Tibial artery (tissue), 4 donors: ENCODE measurements at regions of chr12 and their contacts with region 1.

Region 1: GRCh38 chr12:64392221-64392620 is 1.7 kb upstream of the C12orf56 start:
- DNase-seq: no peak
- H3K4me3 ChIP-seq: no peak overlapping the region
- H3K27ac ChIP-seq: no peak overlapping the region
- H3K4me1 ChIP-seq: peaks cover 0 to 8% (median 3%) of the 10 kb centered on the region in 4 donors
- H3K27me3 ChIP-seq: peaks cover 0 to 33% of the 10 kb centered on the region in 2 donors
- CTCF ChIP-seq: no peak

Region 2: DNA sequence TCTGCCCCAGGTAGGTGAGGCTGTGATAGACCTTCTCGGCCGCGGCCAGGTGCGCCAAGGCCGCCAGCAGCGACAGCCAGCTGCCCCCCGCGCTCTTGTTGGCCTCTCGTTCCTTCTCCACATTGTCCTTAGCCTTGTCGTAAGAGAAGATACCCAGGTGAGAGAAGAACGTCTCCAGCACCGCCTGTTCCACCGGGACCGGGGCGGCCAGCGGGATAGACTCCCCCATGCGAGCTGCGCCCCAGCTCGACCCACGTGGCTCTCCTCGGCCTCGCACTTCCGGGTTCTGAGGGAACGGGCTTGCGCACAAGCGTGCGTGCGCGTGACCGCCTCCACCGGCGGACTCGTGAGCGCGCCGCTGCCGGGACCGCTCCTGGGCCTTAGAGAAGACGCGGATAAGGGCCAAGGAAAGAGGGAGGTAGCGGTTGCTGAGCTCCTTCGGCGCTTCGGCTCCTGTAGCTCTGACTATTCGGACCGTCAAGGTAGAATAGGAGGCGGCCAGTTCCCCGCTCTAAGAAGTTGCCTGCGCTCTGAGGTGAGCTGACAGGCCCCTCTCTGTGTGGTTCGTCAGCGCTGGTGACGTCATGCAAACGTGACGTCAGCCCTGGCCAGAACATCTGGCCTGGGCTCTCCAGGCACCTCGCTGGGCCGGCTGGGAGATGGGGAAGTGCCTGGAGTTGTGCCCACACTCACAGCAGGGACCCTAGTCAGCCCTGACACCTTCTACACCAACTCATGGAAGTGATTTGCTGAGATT is 170.0 kb before region 1 on chr12 and contains the start of gene KICS2:
- intact Hi-C with region 1: loop called (anchors 10 kb)
- DNase-seq: peak; percentile 92 to 96
- H3K4me3 ChIP-seq: peak within 1 kb of the TSS; percentile 95
- H3K27ac ChIP-seq: peak within 1 kb of the TSS; percentile 96
- H3K4me1 ChIP-seq: peaks cover 0 to 10% (median 6%) of the 10 kb centered on the region in 4 donors
- H3K27me3 ChIP-seq: no peaks in the 10 kb centered on the region
- CTCF ChIP-seq: no peak

Region 3: GRCh38 chr12:64258576-64258975 is 133.6 kb before region 1 on chr12:
- intact Hi-C with region 1: no loop called
- DNase-seq: no peak
- H3K4me3 ChIP-seq: no peak overlapping the region
- H3K27ac ChIP-seq: no peak overlapping the region
- H3K4me1 ChIP-seq: no peaks in the 10 kb centered on the region
- H3K27me3 ChIP-seq: no peaks in the 10 kb centered on the region
- CTCF ChIP-seq: no peak

Region 4: GRCh38 chr12:64522316-64522715 is 130.1 kb after region 1 on chr12:
- intact Hi-C with region 1: no loop called
- DNase-seq: no peak
- H3K4me3 ChIP-seq: no peak overlapping the region
- H3K27ac ChIP-seq: no peak overlapping the region
- H3K4me1 ChIP-seq: no peaks in the 10 kb centered on the region
- H3K27me3 ChIP-seq: no peaks in the 10 kb centered on the region
- CTCF ChIP-seq: no peak